Activated naive CD4-positive, alpha-beta T cell treated with anti-CD3 and anti-CD28 coated beads for 36 hours (primary cell): ENCODE measurements at regions of chr22 and their contacts with region 1.

Region 1: GRCh38 chr22:44735540-44736488 is 16.6 kb upstream of the ARHGAP8 start:
- DNase-seq: peak; percentile 85
- H3K4me3 Mint-ChIP-seq: no peak overlapping the region
- H3K27ac Mint-ChIP-seq: no peak overlapping the region
- H3K4me1 Mint-ChIP-seq: peaks cover 2% of the 10 kb centered on the region
- H3K27me3 Mint-ChIP-seq: no peaks in the 10 kb centered on the region

Region 2: GRCh38 chr22:44701824-44702478 is 33.9 kb before region 1 on chr22 and contains the start of gene PRR5:
- CTCF ChIA-PET with region 1: interaction called, 25 read pairs
- intact Hi-C with region 1: loop called (anchors 1 kb)
- DNase-seq: peak; percentile 87
- H3K4me3 Mint-ChIP-seq: peak within 1 kb of the TSS; percentile 73
- H3K27ac Mint-ChIP-seq: peak within 1 kb of the TSS; percentile 36
- H3K4me1 Mint-ChIP-seq: peaks cover 20% of the 10 kb centered on the region
- H3K27me3 Mint-ChIP-seq: no peaks in the 10 kb centered on the region
- total RNA-seq, gene PRR5: 7.9 to 10.2 TPM

Region 3: DNA sequence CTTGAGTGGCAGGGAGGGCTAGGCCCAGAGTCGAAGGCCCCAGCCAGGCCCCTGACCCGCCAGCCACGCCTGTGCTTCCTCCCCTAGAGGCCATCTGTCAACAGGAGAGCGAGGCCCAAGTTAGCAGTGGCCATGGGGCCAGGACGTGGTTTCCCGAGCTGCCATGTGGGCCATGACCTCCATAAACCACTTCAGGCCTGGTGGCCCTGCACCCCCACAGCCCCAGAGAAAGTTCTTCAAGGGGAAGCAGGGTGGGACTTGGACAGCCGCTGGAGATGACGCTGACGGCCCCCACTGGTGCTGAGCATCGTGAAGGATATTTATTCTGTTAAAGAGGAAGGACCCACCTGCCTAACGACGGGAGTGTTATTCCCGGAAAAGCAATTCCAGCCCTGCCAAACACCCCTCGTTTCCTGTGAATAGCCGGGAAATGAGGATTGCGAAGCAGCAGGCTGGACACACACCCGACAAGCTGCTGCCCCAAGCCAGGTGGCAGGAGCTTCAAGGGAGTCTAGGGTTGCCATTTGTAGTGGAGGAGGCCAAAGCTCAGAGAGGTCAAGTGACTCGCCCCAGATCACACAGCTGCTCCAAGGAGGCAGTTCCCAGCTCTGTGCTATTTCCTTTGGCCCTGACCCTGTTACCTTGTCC is 21.0 kb before region 1 on chr22:
- CTCF ChIA-PET with region 1: no interaction called
- intact Hi-C with region 1: no loop called
- DNase-seq: no peak
- H3K4me3 Mint-ChIP-seq: no peak overlapping the region
- H3K27ac Mint-ChIP-seq: no peak overlapping the region
- H3K4me1 Mint-ChIP-seq: peaks cover 7% of the 10 kb centered on the region
- H3K27me3 Mint-ChIP-seq: no peaks in the 10 kb centered on the region